ENCODE measurements at regions of chr13 and their contacts with region 1.

Region 1: GRCh38 chr13:97109841-97110492 is 112.2 kb upstream of the MBNL2 start:
- DNase-seq: peak; percentile 94 to 98
- ATAC-seq: peak; percentile 96
- H3K4me3 ChIP-seq: no peak overlapping the region
- H3K27ac ChIP-seq: no peak overlapping the region
- H3K4me1 ChIP-seq: no peaks in the 10 kb centered on the region
- H3K27me3 ChIP-seq: no peaks in the 10 kb centered on the region

Region 2: DNA sequence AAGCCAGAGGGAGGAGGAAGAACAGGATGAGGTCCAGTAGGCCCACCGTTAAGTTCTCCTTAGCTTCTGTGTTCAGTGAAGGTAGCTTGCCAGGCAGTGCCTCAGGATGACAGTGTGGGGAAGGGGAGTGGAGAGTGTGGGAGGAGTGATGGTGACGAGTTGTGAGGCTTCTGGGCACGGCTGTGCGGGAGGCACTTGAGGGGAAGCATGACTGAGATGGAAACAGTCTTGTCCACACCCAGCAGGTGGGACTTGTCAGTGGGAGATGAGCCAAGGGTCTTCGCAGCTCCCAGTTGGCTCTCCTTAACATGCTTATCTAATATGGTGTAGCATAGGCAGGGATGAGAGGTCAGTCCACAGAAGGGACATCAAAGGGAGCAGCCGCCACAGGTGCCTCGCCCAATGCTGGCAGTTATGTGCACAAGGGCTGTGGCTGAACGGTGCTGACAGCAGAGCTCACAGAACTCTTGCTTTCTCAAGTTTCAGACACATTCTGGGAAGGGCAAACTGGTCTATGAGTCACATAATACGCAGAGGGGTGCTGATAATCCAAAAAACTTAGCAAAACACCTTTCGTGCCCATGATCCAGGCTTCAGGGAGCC is 163.2 kb before region 1 on chr13:
- intact Hi-C with region 1: no loop called
- DNase-seq: no peak
- ATAC-seq: no peak
- H3K4me3 ChIP-seq: no peak overlapping the region
- H3K27ac ChIP-seq: no peak overlapping the region
- H3K4me1 ChIP-seq: no peaks in the 10 kb centered on the region
- H3K27me3 ChIP-seq: no peaks in the 10 kb centered on the region

Region 3: DNA sequence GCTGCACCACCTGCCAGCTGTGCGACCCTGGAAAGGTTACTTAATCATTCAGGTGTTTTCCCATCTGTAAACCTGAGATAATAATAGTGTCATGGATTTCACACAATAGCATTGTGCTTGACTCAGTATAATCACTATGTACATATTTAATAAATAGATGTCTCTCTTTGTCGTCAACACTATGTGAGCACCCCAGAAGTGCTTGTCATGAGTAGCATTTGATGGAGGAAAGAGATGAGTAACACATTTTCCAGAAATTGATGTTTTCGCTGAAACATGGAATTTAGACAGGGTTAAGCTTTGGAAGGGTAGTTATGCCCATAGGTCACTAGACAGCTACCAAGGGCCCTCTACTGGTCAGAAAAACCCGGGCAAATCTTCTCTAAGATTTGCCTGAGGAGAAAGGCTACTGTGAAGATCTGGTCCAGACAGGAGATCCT is 102.7 kb after region 1 on chr13:
- intact Hi-C with region 1: loop called in 1 of 2 experiments (anchors 2 kb)
- DNase-seq: no peak
- ATAC-seq: no peak
- H3K4me3 ChIP-seq: no peak overlapping the region
- H3K27ac ChIP-seq: no peak overlapping the region
- H3K4me1 ChIP-seq: no peaks in the 10 kb centered on the region
- H3K27me3 ChIP-seq: no peaks in the 10 kb centered on the region

Region 4: DNA sequence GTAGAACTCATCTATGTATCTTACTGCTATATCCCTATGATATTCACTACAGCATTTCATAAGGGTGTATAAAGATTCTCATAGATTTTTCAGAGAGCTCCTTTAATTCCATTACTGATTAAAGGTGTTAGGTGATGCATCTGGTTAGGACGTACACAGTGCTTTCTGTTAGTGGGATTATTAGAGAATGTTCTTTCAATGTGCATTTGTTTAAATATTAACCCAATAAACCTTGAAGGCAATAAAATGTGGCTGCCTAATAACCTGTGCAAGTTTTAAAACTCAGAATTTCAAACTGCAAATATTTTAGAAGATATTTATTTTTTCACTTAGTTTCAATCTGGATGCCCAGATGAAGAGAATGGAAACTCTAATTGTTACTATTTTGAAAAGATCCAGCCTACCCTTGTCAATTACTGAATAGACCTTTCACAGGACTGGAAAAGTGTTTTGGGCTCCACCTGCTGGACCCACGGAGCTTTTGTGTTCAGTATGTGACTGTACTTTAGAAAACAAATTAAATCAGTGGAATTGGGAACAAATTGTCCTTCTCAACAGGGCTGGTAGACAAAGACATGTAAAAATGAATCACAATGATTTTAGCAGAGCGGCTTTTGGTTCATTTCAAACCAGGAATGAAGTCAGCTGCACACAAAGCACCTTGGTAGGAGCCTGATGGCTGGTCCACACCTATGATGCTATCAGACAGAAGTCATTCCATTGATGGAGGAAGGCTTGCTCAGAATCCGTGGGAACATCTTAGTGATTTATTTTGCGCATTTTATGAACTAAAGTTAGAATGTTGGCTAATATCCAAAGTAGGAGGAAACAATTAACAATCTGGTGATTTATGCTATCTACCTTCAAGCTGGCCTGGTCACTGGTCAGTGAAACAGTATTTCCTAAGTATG is 234.6 kb after region 1 on chr13:
- intact Hi-C with region 1: loop called (anchors 5 kb)
- DNase-seq: peak; percentile 60 to 85
- ATAC-seq: peak; percentile 75
- H3K4me3 ChIP-seq: no peak overlapping the region
- H3K27ac ChIP-seq: no peak overlapping the region
- H3K4me1 ChIP-seq: peaks cover 0 to 3% of the 10 kb centered on the region in 2 donors
- H3K27me3 ChIP-seq: no peaks in the 10 kb centered on the region

Region 5: GRCh38 chr13:97432917-97433726 is 323.2 kb after region 1 on chr13:
- intact Hi-C with region 1: loop called (anchors 10 kb)
- DNase-seq: peak; percentile 99
- ATAC-seq: peak; percentile 97
- H3K4me3 ChIP-seq: peak overlapping the region; percentile 82 to 91
- H3K27ac ChIP-seq: peak overlapping the region; percentile 96 to 100
- H3K4me1 ChIP-seq: peaks cover 0 to 1% of the 10 kb centered on the region in 2 donors
- H3K27me3 ChIP-seq: no peaks in the 10 kb centered on the region

Region 6: GRCh38 chr13:97710797-97711196 is 600.8 kb after region 1 on chr13:
- intact Hi-C with region 1: no loop called
- DNase-seq: no peak
- ATAC-seq: no peak
- H3K4me3 ChIP-seq: no peak overlapping the region
- H3K27ac ChIP-seq: no peak overlapping the region
- H3K4me1 ChIP-seq: no peaks in the 10 kb centered on the region
- H3K27me3 ChIP-seq: no peaks in the 10 kb centered on the region

Measured in aorta (tissue), 5 donors.